Naive thymus-derived CD4-positive, alpha-beta T cell (primary cell): ENCODE measurements at regions of chr14 and their contacts with region 1.

Region 1: DNA sequence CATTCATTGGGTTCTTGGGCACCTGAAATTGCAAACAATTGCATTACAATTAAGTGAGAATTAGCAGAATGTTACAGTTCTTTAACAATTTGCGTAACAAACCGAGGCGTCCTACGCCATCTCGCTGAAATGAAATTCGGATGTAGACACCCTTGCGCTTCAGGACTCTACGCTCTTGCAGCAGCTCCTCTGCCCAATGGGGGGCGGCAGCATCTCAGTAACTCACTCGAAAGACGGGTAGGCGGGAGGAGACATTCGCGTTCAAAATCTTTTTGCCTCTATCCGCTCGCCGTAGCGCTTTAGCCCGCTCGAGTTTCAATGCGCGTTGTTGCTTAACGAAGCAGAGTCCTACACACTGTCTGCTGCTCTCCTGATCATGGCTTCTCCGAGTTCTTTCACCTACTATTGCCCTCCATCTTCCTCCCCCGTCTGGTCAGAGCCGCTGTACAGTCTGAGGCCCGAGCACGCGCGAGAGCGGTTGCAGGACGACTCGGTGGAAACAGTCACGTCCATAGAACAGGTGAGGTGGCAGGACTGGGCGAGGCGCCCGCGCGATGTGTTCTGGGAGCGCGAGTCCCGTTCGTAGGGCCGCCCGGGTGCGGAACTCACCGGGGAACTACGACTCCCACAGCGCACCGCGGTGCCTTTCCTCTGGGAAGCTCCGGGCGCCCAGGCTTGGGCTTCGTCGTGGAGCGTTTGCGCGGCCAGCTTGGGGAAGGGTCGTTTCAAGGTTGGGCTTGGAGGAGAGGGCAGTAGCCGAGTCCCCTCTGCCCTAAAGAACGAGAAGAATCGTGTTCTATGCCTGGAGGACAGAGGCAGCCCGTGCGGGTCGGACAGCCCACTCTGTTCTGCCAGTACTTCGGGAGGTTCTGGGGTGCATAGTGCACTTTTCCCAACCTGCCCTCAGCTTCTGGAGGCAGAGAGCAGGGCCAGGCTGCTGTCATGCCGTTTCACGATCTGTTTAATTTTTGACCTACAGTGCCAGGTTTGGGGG is at the start of gene FNTB:
- DNase-seq: peak; percentile 80 to 96 (median 94)
- ATAC-seq: peak; percentile 95
- H3K4me3 ChIP-seq: peak within 1 kb of the TSS; percentile 97
- H3K4me3 Mint-ChIP-seq: peak within 1 kb of the TSS; percentile 88 to 100 (median 95)
- H3K27ac ChIP-seq: peak within 1 kb of the TSS; percentile 76
- H3K27ac Mint-ChIP-seq: peak within 1 kb of the TSS; percentile 92 to 99 (median 96)
- H3K4me1 ChIP-seq: peaks cover 14 to 38% of the 10 kb centered on the region in 2 donors
- H3K4me1 Mint-ChIP-seq: peaks cover 41 to 68% (median 60%) of the 10 kb centered on the region in 7 donors
- H3K27me3 ChIP-seq: no peaks in the 10 kb centered on the region
- H3K27me3 Mint-ChIP-seq: peaks cover 0 to 29% (median 3%) of the 10 kb centered on the region in 5 donors
- total RNA-seq, gene FNTB: 10.4 to 19.7 (median 12.9) TPM

Region 2: DNA sequence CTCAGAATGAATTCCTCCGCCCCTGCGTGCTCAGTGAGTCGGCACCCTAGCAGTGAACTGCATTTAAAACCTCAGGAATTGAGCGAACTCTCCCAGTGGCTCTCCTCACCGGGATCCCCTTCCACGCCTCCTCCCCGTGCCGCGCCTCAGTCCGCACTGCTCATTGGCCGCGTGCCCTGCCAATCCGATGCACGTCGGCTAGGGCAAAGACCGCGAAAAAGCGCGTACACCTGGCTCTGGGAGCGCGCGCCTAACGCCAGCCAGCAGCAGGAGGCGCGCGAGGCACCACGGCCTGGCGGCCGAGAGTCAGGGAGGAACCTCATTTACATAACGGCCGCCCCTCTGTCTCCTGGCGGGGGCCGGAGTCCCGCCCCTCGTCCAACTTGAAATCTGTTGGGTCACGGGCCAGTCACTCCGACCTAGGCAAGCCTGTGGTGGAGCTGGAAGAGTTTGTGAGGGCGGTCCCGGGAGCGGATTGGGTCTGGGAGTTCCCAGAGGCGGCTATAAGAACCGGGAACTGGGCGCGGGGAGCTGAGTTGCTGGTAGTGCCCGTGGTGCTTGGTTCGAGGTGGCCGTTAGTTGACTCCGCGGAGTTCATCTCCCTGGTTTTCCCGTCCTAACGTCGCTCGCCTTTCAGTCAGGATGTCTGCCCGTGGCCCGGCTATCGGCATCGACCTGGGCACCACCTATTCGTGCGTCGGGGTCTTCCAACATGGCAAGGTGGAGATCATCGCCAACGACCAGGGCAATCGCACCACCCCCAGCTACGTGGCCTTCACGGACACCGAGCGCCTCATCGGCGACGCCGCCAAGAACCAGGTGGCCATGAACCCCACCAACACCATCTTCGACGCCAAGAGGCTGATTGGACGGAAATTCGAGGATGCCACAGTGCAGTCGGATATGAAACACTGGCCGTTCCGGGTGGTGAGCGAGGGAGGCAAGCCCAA is 446.4 kb before region 1 on chr14 and contains the start of gene HSPA2:
- CTCF ChIA-PET with region 1: no interaction called
- POLR2A ChIA-PET with region 1: no interaction called
- intact Hi-C with region 1: loop called in 1 of 2 experiments (anchors 5 kb)
- DNase-seq: peak; percentile 87 to 94 (median 91)
- ATAC-seq: peak; percentile 94
- H3K4me3 ChIP-seq: peak within 1 kb of the TSS; percentile 90
- H3K4me3 Mint-ChIP-seq: peak within 1 kb of the TSS; percentile 87 to 98 (median 94)
- H3K27ac ChIP-seq: peak within 1 kb of the TSS; percentile 53
- H3K27ac Mint-ChIP-seq: peak within 1 kb of the TSS; percentile 61 to 95 (median 81)
- H3K4me1 ChIP-seq: peaks cover 4 to 9% of the 10 kb centered on the region in 2 donors
- H3K4me1 Mint-ChIP-seq: peaks cover 21 to 44% (median 34%) of the 10 kb centered on the region in 7 donors
- H3K27me3 ChIP-seq: no peaks in the 10 kb centered on the region
- H3K27me3 Mint-ChIP-seq: peaks cover 0 to 54% (median 3%) of the 10 kb centered on the region in 5 donors
- total RNA-seq, gene HSPA2: 0.32 to 2.5 (median 0.76) TPM

Region 3: DNA sequence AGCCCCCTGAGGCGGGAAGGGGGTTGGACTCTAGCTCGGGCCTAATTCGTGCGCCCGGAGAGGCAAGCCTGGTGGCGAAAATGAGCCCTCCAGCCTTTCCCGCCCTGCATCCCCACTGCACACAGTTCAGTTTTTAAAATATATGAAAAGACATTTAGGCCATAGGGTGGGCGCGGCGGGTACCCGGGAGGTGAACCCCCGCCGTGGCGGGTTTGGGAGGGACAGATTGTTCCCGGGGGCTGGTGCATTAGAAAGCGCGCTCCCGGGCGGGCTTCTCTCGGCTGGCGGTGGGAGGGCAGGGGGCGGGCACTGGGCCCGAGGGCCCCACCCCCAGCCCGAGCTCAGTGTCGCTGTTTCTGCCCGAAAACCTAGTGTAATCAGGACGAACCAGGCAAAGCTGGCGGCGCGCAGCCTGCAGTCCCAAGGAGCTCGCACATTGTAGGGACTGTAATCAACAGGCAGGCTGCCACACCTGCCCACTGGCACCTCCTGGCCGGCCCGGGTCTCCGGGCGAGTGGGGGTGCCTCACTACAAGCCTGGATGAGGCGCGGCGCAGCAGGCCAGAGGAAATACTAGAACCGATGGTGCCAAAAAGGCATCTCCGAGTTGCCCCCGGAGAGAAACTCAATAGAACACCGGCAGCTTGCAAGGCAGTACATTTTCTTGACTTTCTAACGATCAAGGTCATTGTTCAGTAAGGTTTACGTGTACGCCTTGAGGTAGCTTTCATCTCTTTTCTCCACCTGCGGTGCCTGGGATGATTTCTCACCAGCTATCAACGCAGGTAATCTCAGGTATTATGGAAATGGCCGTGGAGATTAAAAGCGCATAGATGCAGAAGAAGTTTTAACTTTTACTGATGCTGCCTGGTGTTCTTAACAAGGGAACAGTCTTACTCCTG is 106.4 kb before region 1 on chr14:
- CTCF ChIA-PET with region 1: no interaction called
- POLR2A ChIA-PET with region 1: no interaction called
- intact Hi-C with region 1: loop called in 1 of 2 experiments (anchors 1 kb)
- DNase-seq: peak; percentile 29 to 68 (median 54)
- ATAC-seq: peak; percentile 85
- H3K4me3 ChIP-seq: peak overlapping the region; percentile 67
- H3K4me3 Mint-ChIP-seq: peak overlapping the region; percentile 85 to 92 (median 88)
- H3K27ac ChIP-seq: peak overlapping the region; percentile 20
- H3K27ac Mint-ChIP-seq: peak overlapping the region in 4 of 9 donors; percentile 14 to 59 (median 36)
- H3K4me1 ChIP-seq: peaks cover 0 to 4% of the 10 kb centered on the region in 2 donors
- H3K4me1 Mint-ChIP-seq: peaks cover 0 to 11% (median 8%) of the 10 kb centered on the region in 7 donors
- H3K27me3 ChIP-seq: peaks cover 0 to 7% of the 10 kb centered on the region in 2 donors
- H3K27me3 Mint-ChIP-seq: peaks cover 13 to 81% (median 19%) of the 10 kb centered on the region in 5 donors

Region 4: GRCh38 chr14:64971943-64972791 is 14.7 kb before region 1 on chr14 and contains the start of gene RAB15:
- CTCF ChIA-PET with region 1: interaction called, 5 read pairs
- POLR2A ChIA-PET with region 1: interaction called, 8 read pairs
- intact Hi-C with region 1: loop called (anchors 1 kb)
- DNase-seq: peak; percentile 23 to 66 (median 44)
- ATAC-seq: peak; percentile 73
- H3K4me3 ChIP-seq: peak within 1 kb of the TSS; percentile 68
- H3K4me3 Mint-ChIP-seq: peak within 1 kb of the TSS; percentile 76 to 92 (median 84)
- H3K27ac ChIP-seq: peak within 1 kb of the TSS; percentile 60
- H3K27ac Mint-ChIP-seq: peak within 1 kb of the TSS; percentile 42 to 82 (median 70)
- H3K4me1 ChIP-seq: peaks cover 0 to 10% of the 10 kb centered on the region in 2 donors
- H3K4me1 Mint-ChIP-seq: peaks cover 10 to 32% (median 24%) of the 10 kb centered on the region in 7 donors
- H3K27me3 ChIP-seq: no peaks in the 10 kb centered on the region
- H3K27me3 Mint-ChIP-seq: peaks cover 0 to 20% (median 0%) of the 10 kb centered on the region in 5 donors
- total RNA-seq, gene RAB15: 4.9 to 7.1 (median 5.9) TPM

Region 5: DNA sequence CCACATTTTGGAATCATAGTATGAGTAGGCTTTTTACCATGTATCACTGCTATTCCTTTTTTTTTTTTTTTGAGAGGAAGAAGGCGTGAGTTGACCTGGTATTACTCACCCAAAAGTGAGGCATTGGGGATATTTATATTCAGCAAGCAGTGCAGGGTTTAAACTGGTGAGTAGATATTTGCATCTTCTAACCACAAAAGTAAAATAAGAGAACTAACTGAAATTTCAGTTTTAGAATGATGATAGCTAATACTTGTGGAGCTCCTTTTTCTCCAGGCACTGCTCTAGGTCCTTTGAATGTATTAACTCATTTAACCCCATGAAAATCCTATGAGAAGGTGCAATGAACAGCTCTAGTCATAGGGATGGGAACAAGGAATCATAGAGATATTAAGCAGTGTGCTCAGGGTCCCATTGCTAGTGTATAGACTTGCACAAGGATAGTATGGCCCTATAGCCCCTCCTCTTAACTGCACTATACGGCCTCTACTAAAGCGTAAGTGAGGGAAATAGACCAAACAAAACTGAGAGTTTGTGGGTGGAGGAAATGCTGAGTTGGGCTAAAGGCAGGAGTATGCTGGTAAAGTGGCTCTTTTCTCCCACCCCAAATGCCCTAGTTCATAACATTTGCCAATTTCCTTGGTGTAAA is 219.7 kb after region 1 on chr14:
- CTCF ChIA-PET with region 1: no interaction called
- POLR2A ChIA-PET with region 1: no interaction called
- intact Hi-C with region 1: loop called in 1 of 2 experiments (anchors 5 kb)
- DNase-seq: peak in 1 of 9 donors; percentile 36
- ATAC-seq: peak; percentile 73
- H3K4me3 ChIP-seq: no peak overlapping the region
- H3K4me3 Mint-ChIP-seq: peak overlapping the region in 9 of 10 donors; percentile 41 to 85 (median 70)
- H3K27ac ChIP-seq: peak overlapping the region; percentile 14
- H3K27ac Mint-ChIP-seq: peak overlapping the region; percentile 81 to 93 (median 83)
- H3K4me1 ChIP-seq: peaks cover 40 to 45% of the 10 kb centered on the region in 2 donors
- H3K4me1 Mint-ChIP-seq: peaks cover 35 to 69% (median 58%) of the 10 kb centered on the region in 7 donors
- H3K27me3 ChIP-seq: no peaks in the 10 kb centered on the region
- H3K27me3 Mint-ChIP-seq: no peaks in the 10 kb centered on the region

Region 6: GRCh38 chr14:65927931-65928356 is 941.1 kb after region 1 on chr14:
- CTCF ChIA-PET with region 1: no interaction called
- POLR2A ChIA-PET with region 1: no interaction called
- intact Hi-C with region 1: loop called in 1 of 2 experiments (anchors 5 kb)
- DNase-seq: peak; percentile 31 to 77 (median 70)
- ATAC-seq: peak; percentile 92
- H3K4me3 ChIP-seq: peak overlapping the region; percentile 5
- H3K4me3 Mint-ChIP-seq: peak overlapping the region; percentile 68 to 80 (median 73)
- H3K27ac ChIP-seq: peak overlapping the region; percentile 52
- H3K27ac Mint-ChIP-seq: peak overlapping the region; percentile 84 to 98 (median 92)
- H3K4me1 ChIP-seq: peaks cover 47 to 51% of the 10 kb centered on the region in 2 donors
- H3K4me1 Mint-ChIP-seq: peaks cover 45 to 72% (median 61%) of the 10 kb centered on the region in 7 donors
- H3K27me3 ChIP-seq: no peaks in the 10 kb centered on the region
- H3K27me3 Mint-ChIP-seq: no peaks in the 10 kb centered on the region